ENCODE measurements at regions of chr3 and their contacts with region 1.

Region 1: GRCh38 chr3:14780927-14781507 is 37.7 kb upstream of the FGD5 start:
- DNase-seq: peak; percentile 86
- ATAC-seq: peak; percentile 95
- H3K4me3 Mint-ChIP-seq: no peak overlapping the region
- H3K27ac Mint-ChIP-seq: no peak overlapping the region
- H3K4me1 Mint-ChIP-seq: peaks cover 18% of the 10 kb centered on the region
- H3K27me3 Mint-ChIP-seq: no peaks in the 10 kb centered on the region
- CTCF ChIP-seq: peak; percentile 57

Region 2: DNA sequence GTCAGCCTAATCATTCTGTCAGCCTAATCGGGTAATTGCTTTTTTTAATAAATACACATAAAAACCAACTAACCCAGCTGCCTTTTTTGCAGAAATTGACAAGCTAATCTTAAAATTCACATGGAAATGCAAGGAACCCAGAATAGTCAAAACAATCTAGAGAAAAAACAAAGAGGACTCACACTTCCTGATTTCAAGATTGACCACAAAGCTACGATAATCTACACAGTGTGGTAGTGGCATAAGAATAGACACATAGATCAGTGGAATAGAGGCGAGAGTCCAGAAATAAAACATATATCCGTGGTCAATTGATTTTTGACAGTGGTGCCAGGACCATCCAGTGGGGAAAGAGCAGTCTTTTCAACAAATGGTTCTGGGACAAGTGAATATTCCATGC is 108.4 kb before region 1 on chr3:
- CTCF ChIA-PET with region 1: interaction called, 59 read pairs
- POLR2A ChIA-PET with region 1: no interaction called
- DNase-seq: no peak
- ATAC-seq: no peak
- H3K4me3 Mint-ChIP-seq: no peak overlapping the region
- H3K27ac Mint-ChIP-seq: no peak overlapping the region
- H3K4me1 Mint-ChIP-seq: no peaks in the 10 kb centered on the region
- H3K27me3 Mint-ChIP-seq: no peaks in the 10 kb centered on the region
- CTCF ChIP-seq: no peak

Region 3: DNA sequence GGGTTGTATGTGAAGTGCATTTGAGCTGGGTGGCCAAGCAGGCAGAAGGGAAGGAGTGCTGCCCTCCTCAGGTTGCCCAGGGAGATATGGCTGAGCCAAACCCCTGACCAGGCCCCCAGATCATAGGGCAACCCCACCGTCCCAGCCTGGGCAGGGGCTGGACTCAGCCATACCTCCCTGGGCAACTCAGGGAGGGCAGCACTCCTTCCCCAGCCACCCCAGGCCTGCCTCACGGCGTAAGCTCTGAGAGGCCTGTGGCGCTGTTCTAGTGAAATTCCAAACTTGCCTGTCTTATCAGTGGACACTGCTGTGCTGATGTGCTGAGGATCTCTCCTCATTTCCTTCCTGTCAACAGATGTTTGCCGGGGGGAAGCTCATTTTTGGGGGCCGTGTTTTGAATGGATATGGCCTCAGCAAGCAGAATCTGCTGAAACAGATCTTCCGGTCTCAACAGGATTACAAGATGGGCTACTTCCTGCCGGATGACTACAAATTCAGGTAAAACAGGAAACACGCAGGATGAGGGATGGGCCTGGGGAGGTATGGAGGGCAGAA is 19.8 kb before region 1 on chr3:
- CTCF ChIA-PET with region 1: interaction called, 26 read pairs
- POLR2A ChIA-PET with region 1: no interaction called
- DNase-seq: peak; percentile 35
- ATAC-seq: peak; percentile 83
- H3K4me3 Mint-ChIP-seq: no peak overlapping the region
- H3K27ac Mint-ChIP-seq: no peak overlapping the region
- H3K4me1 Mint-ChIP-seq: peaks cover 4% of the 10 kb centered on the region
- H3K27me3 Mint-ChIP-seq: no peaks in the 10 kb centered on the region; the same call in 1 of the 2 replicates
- CTCF ChIP-seq: no peak

Region 4: GRCh38 chr3:14857506-14857905 is 76.5 kb after region 1 on chr3:
- CTCF ChIA-PET with region 1: interaction called, 13 read pairs
- POLR2A ChIA-PET with region 1: no interaction called
- DNase-seq: no peak
- ATAC-seq: peak; percentile 71
- H3K4me3 Mint-ChIP-seq: no peak overlapping the region
- H3K27ac Mint-ChIP-seq: no peak overlapping the region
- H3K4me1 Mint-ChIP-seq: peaks cover 24% of the 10 kb centered on the region
- H3K27me3 Mint-ChIP-seq: no peaks in the 10 kb centered on the region; the same call in 1 of the 2 replicates
- CTCF ChIP-seq: no peak

Region 5: DNA sequence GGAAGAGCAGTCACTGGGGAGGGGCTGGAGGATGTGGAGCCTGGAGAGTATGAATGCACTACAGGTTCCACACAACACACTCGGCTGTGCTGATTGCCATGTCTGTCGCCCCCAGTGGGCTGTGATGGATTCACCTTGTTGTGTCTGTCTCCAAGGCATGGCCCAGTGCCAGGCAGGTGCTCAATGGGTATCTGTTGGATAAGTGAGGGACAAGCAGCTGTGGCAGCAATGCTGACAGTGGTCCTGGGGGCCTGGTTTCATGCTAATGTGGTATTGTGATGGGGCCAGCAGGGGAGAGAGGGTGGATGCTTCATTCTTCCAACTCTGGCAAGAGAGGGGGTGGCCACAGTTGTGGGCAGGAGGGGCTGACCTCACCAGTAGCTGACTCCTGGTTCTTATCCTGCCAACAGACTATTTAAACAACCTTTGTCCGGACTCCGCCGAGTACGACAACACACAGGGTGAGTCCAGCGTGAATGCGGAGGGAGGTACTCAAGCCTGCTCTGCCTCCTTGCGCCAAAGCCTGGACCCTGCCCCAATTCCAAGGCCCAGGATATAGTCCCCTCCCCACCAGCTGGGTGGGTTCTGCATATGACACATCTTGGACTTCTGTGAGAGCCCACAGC is 119.1 kb after region 1 on chr3:
- CTCF ChIA-PET with region 1: interaction called, 12 read pairs
- POLR2A ChIA-PET with region 1: no interaction called
- DNase-seq: peak; percentile 47
- ATAC-seq: peak; percentile 72
- H3K4me3 Mint-ChIP-seq: no peak overlapping the region
- H3K27ac Mint-ChIP-seq: peak overlapping the region; percentile 55; the same call in 1 of the 2 replicates
- H3K4me1 Mint-ChIP-seq: peaks cover 31% of the 10 kb centered on the region
- H3K27me3 Mint-ChIP-seq: no peaks in the 10 kb centered on the region
- CTCF ChIP-seq: no peak

Region 6: GRCh38 chr3:14921078-14921616 is 140.1 kb after region 1 on chr3:
- CTCF ChIA-PET with region 1: interaction called, 44 read pairs
- POLR2A ChIA-PET with region 1: no interaction called
- DNase-seq: peak; percentile 90
- ATAC-seq: peak; percentile 89
- H3K4me3 Mint-ChIP-seq: no peak overlapping the region
- H3K27ac Mint-ChIP-seq: no peak overlapping the region
- H3K4me1 Mint-ChIP-seq: peaks cover 4% of the 10 kb centered on the region
- H3K27me3 Mint-ChIP-seq: no peaks in the 10 kb centered on the region
- CTCF ChIP-seq: peak; percentile 98